ENCODE measurements at regions of chr1 and their contacts with region 1.

Region 1: GRCh38 chr1:54950369-54951163 is 29.9 kb upstream of the TMEM61 start:
- DNase-seq: peak; percentile 76
- H3K4me3 Mint-ChIP-seq: peak overlapping the region; percentile 43
- H3K27ac Mint-ChIP-seq: peak overlapping the region; percentile 17
- H3K4me1 Mint-ChIP-seq: peaks cover 48% of the 10 kb centered on the region
- H3K27me3 Mint-ChIP-seq: no peaks in the 10 kb centered on the region
- CTCF ChIP-seq: peak; percentile 68

Region 2: GRCh38 chr1:54927472-54928240 is 22.9 kb before region 1 on chr1:
- CTCF ChIA-PET with region 1: no interaction called
- intact Hi-C with region 1: no loop called
- DNase-seq: no peak
- H3K4me3 Mint-ChIP-seq: no peak overlapping the region
- H3K27ac Mint-ChIP-seq: no peak overlapping the region
- H3K4me1 Mint-ChIP-seq: no peaks in the 10 kb centered on the region
- H3K27me3 Mint-ChIP-seq: peaks cover 8% of the 10 kb centered on the region
- CTCF ChIP-seq: no peak

Region 3: GRCh38 chr1:54971317-54971791 is 20.8 kb after region 1 on chr1:
- CTCF ChIA-PET with region 1: interaction called, 3 read pairs
- intact Hi-C with region 1: loop called (anchors 2 kb)
- DNase-seq: peak; percentile 49
- H3K4me3 Mint-ChIP-seq: no peak overlapping the region
- H3K27ac Mint-ChIP-seq: peak overlapping the region; percentile 34
- H3K4me1 Mint-ChIP-seq: peaks cover 58% of the 10 kb centered on the region
- H3K27me3 Mint-ChIP-seq: no peaks in the 10 kb centered on the region
- CTCF ChIP-seq: no peak

Region 4: GRCh38 chr1:54996359-54996868 is 45.8 kb after region 1 on chr1:
- CTCF ChIA-PET with region 1: interaction called, 40 read pairs
- intact Hi-C with region 1: loop called (anchors 1 kb)
- DNase-seq: peak; percentile 88
- H3K4me3 Mint-ChIP-seq: peak overlapping the region; percentile 61
- H3K27ac Mint-ChIP-seq: peak overlapping the region; percentile 23
- H3K4me1 Mint-ChIP-seq: peaks cover 9% of the 10 kb centered on the region
- H3K27me3 Mint-ChIP-seq: peaks cover 44% of the 10 kb centered on the region
- CTCF ChIP-seq: peak; percentile 94

Region 5: GRCh38 chr1:55204997-55205396 is 254.4 kb after region 1 on chr1:
- CTCF ChIA-PET with region 1: no interaction called
- intact Hi-C with region 1: no loop called
- DNase-seq: no peak
- H3K4me3 Mint-ChIP-seq: no peak overlapping the region
- H3K27ac Mint-ChIP-seq: no peak overlapping the region
- H3K4me1 Mint-ChIP-seq: peaks cover 30% of the 10 kb centered on the region
- H3K27me3 Mint-ChIP-seq: no peaks in the 10 kb centered on the region
- CTCF ChIP-seq: no peak